ENCODE measurements at regions of chrX and their contacts with region 1.

Region 1: GRCh38 chrX:115226929-115227328 is 7.0 kb downstream of the LRCH2 start:
- DNase-seq: peak; percentile 17
- H3K4me3 ChIP-seq: no peak overlapping the region
- H3K27ac ChIP-seq: no peak overlapping the region
- H3K4me1 ChIP-seq: peaks cover 9% of the 10 kb centered on the region
- H3K27me3 ChIP-seq: no peaks in the 10 kb centered on the region
- CTCF ChIP-seq: peak; percentile 22 to 39
- POLR2A ChIP-seq: no peak

Region 2: GRCh38 chrX:115259238-115259875 is 32.4 kb after region 1 on chrX:
- CTCF ChIA-PET with region 1: no interaction called
- POLR2A ChIA-PET with region 1: no interaction called
- dilution Hi-C with region 1: no loop called
- intact Hi-C with region 1: no loop called
- DNase-seq: no peak
- H3K4me3 ChIP-seq: no peak overlapping the region
- H3K27ac ChIP-seq: no peak overlapping the region
- H3K4me1 ChIP-seq: no peaks in the 10 kb centered on the region
- H3K27me3 ChIP-seq: no peaks in the 10 kb centered on the region
- CTCF ChIP-seq: no peak
- POLR2A ChIP-seq: no peak

Region 3: GRCh38 chrX:115324194-115324593 is 97.3 kb after region 1 on chrX:
- CTCF ChIA-PET with region 1: no interaction called
- POLR2A ChIA-PET with region 1: no interaction called
- dilution Hi-C with region 1: no loop called
- intact Hi-C with region 1: loop called (anchors 10 kb)
- DNase-seq: peak; percentile 36
- H3K4me3 ChIP-seq: no peak overlapping the region
- H3K27ac ChIP-seq: no peak overlapping the region
- H3K4me1 ChIP-seq: peaks cover 2% of the 10 kb centered on the region
- H3K27me3 ChIP-seq: no peaks in the 10 kb centered on the region
- CTCF ChIP-seq: no peak
- POLR2A ChIP-seq: no peak

Region 4: DNA sequence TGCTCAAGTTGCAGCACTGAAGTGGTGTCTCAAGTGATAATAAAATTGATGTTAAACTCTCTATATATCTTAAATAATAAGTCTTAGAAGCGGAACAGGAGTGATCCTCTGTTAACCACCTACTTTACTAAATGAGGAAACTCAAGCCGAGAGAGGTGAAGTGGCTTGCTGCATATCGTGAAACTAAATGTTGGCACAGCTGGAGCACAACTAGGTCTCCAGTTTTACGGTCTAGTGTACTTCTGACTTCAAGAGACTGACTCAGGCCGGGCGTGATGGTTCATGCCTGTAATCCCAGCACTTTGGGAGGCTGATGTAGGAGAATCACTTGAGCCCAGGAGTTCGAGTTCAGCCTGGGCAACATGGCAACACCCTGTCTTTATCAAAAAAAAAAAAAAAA is 298.6 kb after region 1 on chrX:
- CTCF ChIA-PET with region 1: no interaction called
- POLR2A ChIA-PET with region 1: no interaction called
- dilution Hi-C with region 1: no loop called
- intact Hi-C with region 1: no loop called
- DNase-seq: no peak
- H3K4me3 ChIP-seq: no peak overlapping the region
- H3K27ac ChIP-seq: no peak overlapping the region
- H3K4me1 ChIP-seq: no peaks in the 10 kb centered on the region
- H3K27me3 ChIP-seq: no peaks in the 10 kb centered on the region
- CTCF ChIP-seq: no peak
- POLR2A ChIP-seq: no peak

Measured in endothelial cell of umbilical vein (primary cell).